Posterior cingulate gyrus (tissue), 11 donors: ENCODE measurements at regions of chr14 and their contacts with region 1.

Region 1: DNA sequence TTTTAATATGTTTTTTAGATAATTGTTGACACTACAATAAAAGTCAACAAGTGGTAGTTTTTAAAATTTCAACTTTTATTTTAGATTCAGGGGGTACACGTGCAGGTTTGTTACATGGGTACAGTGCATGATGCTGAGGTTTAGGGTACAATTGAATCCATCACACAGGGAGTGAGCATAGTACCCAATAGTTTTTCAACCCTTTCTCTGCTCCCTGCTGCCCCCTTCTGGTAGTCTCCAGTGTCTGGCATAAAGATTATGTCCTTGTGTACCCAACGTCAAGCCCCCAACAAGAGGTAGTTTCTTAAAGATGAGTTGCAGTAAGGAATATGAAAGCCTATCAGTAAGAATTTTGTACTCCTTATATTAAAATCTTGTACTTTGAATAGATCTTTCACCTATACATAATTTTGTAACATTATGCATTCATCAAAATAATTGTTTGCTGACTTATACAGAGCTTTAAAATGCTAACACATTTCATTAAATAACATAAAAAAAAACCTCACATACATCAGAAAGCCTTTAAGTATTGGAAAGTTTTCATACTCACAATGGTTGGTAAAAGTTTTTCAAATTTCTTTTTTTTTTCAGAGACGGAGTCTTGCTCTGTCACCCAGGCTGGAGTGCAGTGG is 5.4 kb upstream of the RALGAPA1 start:
- DNase-seq: peak in 4 of 10 donors; percentile 29 to 72 (median 52)

Region 2: GRCh38 chr14:35687335-35687939 is 127.1 kb before region 1 on chr14:
- intact Hi-C with region 1: loop called (anchors 5 kb)
- DNase-seq: peak in 3 of 10 donors; percentile 16 to 41 (median 20)

Region 3: DNA sequence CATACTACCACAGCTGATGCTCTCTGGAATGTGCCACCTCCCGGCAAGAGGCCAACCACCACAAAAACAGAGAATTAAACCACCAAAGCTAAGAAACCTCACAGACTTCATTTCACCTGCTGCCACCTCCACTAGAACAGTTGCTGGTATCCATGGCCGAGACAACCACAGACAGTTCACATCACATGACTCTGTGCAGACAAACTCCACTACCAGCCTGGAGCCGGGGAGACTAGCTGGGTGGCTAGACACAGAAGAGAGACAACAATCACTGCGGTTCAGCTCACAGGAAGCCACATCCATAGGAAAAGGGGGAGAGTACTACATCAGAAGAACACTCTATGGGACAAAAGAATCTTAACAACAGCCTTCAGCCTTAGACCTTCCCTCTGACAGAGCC is 83.6 kb before region 1 on chr14:
- intact Hi-C with region 1: no loop called
- DNase-seq: no peak

Region 4: GRCh38 chr14:35826218-35826951 is 11.9 kb after region 1 on chr14 and contains the start of gene BRMS1L:
- intact Hi-C with region 1: loop called (anchors 1 kb)
- DNase-seq: peak; percentile 94 to 100 (median 98)